CD4-positive, alpha-beta memory T cell (primary cell): ENCODE measurements at regions of chrX and their contacts with region 1.

Region 1: DNA sequence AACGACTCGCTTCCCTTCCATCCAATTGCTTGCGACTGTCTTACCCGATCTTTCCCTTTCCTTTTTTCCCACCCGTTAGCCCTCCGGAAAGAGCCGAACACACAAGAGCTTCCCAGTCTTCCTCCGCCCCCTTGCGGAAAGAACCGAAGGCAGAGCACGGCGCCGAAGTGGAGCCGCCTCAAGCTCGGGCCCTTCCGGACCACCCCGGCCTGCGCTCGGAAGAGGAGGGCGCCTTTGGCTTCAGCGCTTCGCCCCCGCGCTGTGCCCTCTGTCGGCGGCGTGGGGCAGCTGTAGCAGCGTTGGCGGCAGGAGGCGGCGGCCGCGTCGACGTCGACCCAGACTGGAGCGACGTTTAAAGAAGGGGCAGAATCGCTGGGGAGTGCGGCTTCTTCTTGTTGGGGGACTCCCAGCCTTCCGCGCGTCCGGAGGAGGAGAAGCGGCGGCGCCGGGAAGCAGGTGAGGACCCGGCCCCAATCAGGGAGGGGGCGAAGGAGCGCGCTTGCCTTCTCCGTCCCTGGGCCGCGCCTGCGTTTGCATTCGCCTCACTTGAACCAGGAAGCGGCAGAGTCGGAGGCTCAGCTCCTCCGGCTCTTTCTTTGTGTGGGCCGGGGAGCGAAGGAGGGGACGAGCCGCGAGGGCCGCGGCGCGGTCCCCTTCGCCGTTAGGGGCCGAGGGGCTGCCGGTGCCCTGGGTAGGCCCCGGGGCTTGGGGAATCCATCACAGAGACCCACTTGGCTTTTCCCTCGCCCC is at the start of gene ZBTB33:
- DNase-seq: peak; percentile 82 to 86 (median 85)
- H3K4me3 ChIP-seq: peak within 1 kb of the TSS; percentile 69 to 82
- H3K4me3 Mint-ChIP-seq: peak within 1 kb of the TSS; percentile 88 to 96 (median 94)
- H3K27ac ChIP-seq: peak within 1 kb of the TSS; percentile 82
- H3K27ac Mint-ChIP-seq: peak within 1 kb of the TSS; percentile 86 to 99 (median 97)
- H3K4me1 ChIP-seq: peaks cover 16% of the 10 kb centered on the region
- H3K4me1 Mint-ChIP-seq: peaks cover 6 to 41% (median 18%) of the 10 kb centered on the region in 4 donors
- H3K27me3 ChIP-seq: no peaks in the 10 kb centered on the region
- H3K27me3 Mint-ChIP-seq: no peaks in the 10 kb centered on the region
- total RNA-seq, gene ZBTB33: 33.5 to 34.6 TPM

Region 2: GRCh38 chrX:120213436-120214265 is 37.0 kb before region 1 on chrX:
- CTCF ChIA-PET with region 1: interaction called, 13 read pairs
- POLR2A ChIA-PET with region 1: no interaction called
- intact Hi-C with region 1: no loop called
- DNase-seq: peak; percentile 38 to 52 (median 44)
- H3K4me3 ChIP-seq: no peak overlapping the region
- H3K4me3 Mint-ChIP-seq: no peak overlapping the region
- H3K27ac ChIP-seq: no peak overlapping the region
- H3K27ac Mint-ChIP-seq: no peak overlapping the region
- H3K4me1 ChIP-seq: no peaks in the 10 kb centered on the region
- H3K4me1 Mint-ChIP-seq: peaks cover 3 to 7% (median 5%) of the 10 kb centered on the region in 4 donors
- H3K27me3 ChIP-seq: no peaks in the 10 kb centered on the region
- H3K27me3 Mint-ChIP-seq: no peaks in the 10 kb centered on the region

Region 3: DNA sequence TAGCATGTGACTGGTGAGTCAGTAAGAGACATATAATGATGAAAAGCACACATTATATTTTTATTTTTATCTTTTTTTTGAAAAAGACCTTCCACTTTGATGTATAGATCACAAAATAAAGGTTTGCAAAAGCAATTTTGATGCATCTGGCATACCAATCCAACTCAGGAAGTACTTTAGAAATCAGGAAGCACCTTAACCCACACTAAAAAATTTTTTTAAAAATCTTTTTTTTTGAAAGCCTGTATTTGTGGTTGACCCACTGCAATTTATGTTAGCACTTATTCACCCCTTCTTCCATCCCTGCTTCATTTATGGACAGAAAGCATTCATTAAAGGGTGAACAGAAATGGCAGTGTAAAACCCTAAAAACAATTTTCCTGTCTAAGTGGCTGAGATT is 44.0 kb after region 1 on chrX:
- CTCF ChIA-PET with region 1: interaction called, 9 read pairs
- POLR2A ChIA-PET with region 1: no interaction called
- intact Hi-C with region 1: loop called (anchors 2 kb)
- DNase-seq: peak in 1 of 5 donors; percentile 17
- H3K4me3 ChIP-seq: no peak overlapping the region
- H3K4me3 Mint-ChIP-seq: peak overlapping the region in 3 of 8 donors; percentile 11 to 65 (median 18)
- H3K27ac ChIP-seq: no peak overlapping the region
- H3K27ac Mint-ChIP-seq: peak overlapping the region in 6 of 7 donors; percentile 24 to 86 (median 56)
- H3K4me1 ChIP-seq: peaks cover 15% of the 10 kb centered on the region
- H3K4me1 Mint-ChIP-seq: peaks cover 6 to 20% (median 9%) of the 10 kb centered on the region in 4 donors
- H3K27me3 ChIP-seq: no peaks in the 10 kb centered on the region
- H3K27me3 Mint-ChIP-seq: no peaks in the 10 kb centered on the region

Region 4: GRCh38 chrX:120308959-120309872 is 58.5 kb after region 1 on chrX:
- CTCF ChIA-PET with region 1: interaction called, 21 read pairs
- POLR2A ChIA-PET with region 1: interaction called, 41 read pairs
- intact Hi-C with region 1: loop called (anchors 1 kb)
- DNase-seq: peak; percentile 72 to 86 (median 78)
- H3K4me3 ChIP-seq: peak overlapping the region; percentile 42 to 52
- H3K4me3 Mint-ChIP-seq: peak overlapping the region; percentile 80 to 96 (median 87)
- H3K27ac ChIP-seq: no peak overlapping the region
- H3K27ac Mint-ChIP-seq: peak overlapping the region; percentile 27 to 99 (median 93)
- H3K4me1 ChIP-seq: peaks cover 22% of the 10 kb centered on the region
- H3K4me1 Mint-ChIP-seq: peaks cover 8 to 30% (median 9%) of the 10 kb centered on the region in 4 donors
- H3K27me3 ChIP-seq: peaks cover 8% of the 10 kb centered on the region
- H3K27me3 Mint-ChIP-seq: peaks cover 4 to 5% of the 10 kb centered on the region in 2 donors

Region 5: GRCh38 chrX:120485638-120486520 is 235.2 kb after region 1 on chrX:
- CTCF ChIA-PET with region 1: interaction called, 3 read pairs
- POLR2A ChIA-PET with region 1: interaction called, 4 read pairs
- intact Hi-C with region 1: loop called (anchors 2 kb)
- DNase-seq: peak; percentile 52 to 76 (median 58)
- H3K4me3 ChIP-seq: peak overlapping the region; percentile 73 to 88
- H3K4me3 Mint-ChIP-seq: peak overlapping the region; percentile 90 to 96 (median 92)
- H3K27ac ChIP-seq: peak overlapping the region; percentile 68
- H3K27ac Mint-ChIP-seq: peak overlapping the region; percentile 95 to 97 (median 96)
- H3K4me1 ChIP-seq: peaks cover 35% of the 10 kb centered on the region
- H3K4me1 Mint-ChIP-seq: peaks cover 12 to 28% (median 22%) of the 10 kb centered on the region in 4 donors
- H3K27me3 ChIP-seq: no peaks in the 10 kb centered on the region
- H3K27me3 Mint-ChIP-seq: no peaks in the 10 kb centered on the region

Region 6: DNA sequence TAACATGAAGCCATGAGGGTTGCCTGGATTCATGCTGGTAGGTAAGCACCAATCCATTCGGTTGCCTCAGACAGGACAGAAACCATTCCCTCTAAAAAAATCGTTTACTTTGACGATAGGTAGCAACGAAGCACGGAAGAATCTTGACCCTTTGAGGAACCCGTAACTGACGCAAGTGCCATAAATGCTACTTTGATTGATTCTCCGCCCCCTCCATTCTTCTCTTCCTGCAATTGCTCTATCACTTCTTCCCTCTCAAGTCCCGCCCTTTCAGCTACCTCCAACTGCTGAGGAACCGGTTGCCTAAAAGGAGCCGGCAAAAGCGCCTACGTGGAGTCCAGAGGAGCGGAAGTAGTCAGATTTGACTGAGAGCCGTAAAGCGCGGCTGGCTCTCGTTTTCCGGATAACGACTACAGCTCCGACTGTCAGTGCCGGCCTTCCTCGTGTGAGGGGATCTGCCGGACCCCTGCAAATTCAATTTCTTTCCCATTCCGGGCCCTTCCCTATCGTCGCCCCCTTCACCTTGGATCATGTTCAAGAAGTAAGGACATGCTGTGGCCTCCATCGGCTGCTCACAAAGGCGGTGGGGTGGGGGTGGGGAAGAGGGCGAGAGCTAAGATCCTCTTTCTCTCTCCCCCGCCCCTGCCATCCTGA is 353.1 kb after region 1 on chrX and contains the start of gene MCTS1:
- CTCF ChIA-PET with region 1: no interaction called
- POLR2A ChIA-PET with region 1: interaction called, 5 read pairs
- intact Hi-C with region 1: loop called (anchors 10 kb)
- DNase-seq: peak; percentile 78 to 93 (median 86)
- H3K4me3 ChIP-seq: peak within 1 kb of the TSS; percentile 55 to 77
- H3K4me3 Mint-ChIP-seq: peak within 1 kb of the TSS; percentile 90 to 98 (median 94)
- H3K27ac ChIP-seq: peak within 1 kb of the TSS; percentile 85
- H3K27ac Mint-ChIP-seq: peak within 1 kb of the TSS; percentile 95 to 99 (median 98)
- H3K4me1 ChIP-seq: peaks cover 17% of the 10 kb centered on the region
- H3K4me1 Mint-ChIP-seq: peaks cover 6 to 14% (median 8%) of the 10 kb centered on the region in 4 donors
- H3K27me3 ChIP-seq: no peaks in the 10 kb centered on the region
- H3K27me3 Mint-ChIP-seq: no peaks in the 10 kb centered on the region
- total RNA-seq, gene MCTS1: 29.1 to 33.3 TPM